H1 (cell line): ENCODE measurements at regions of chr12 and their contacts with region 1.

Region 1: DNA sequence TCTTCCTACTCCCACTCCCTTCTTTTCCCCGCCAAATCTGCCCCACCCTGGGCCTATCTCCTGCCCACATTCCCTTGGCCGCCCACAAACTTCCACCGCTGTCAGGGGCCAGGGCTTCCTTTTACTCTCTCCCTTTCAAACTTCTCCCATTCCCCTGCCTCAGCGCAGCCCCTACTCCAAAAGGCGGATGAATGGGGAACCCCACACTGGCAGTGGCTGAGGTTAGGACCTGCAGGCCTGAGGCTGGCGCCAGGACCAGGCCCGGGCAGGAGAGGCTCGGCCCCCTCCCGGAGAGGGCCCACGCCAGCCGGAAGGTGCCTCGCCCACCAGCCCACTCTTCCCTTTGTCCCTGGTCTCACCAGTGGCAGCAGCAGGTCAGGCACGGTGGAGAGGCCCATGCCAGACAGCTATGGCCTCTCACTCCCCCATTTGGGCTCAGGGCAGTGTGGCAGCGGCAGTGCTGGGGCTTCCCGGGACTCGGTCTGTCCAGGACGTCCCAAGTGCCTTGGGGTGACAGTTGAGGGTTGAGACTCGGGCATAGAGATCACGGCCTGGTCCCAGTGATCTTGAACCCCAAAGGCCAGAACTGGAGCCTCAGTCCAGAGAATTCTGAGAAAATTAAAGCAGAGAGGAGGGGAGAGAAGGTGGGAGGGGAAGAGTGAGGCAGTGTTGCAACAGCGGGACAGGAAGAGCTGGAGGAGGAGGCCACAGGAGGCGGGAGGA is at the start of gene TNFRSF1A:
- DNase-seq: no peak
- H3K4me3 ChIP-seq: peak within 1 kb of the TSS; percentile 54 to 89 (median 82)
- H3K27ac ChIP-seq: peak within 1 kb of the TSS; percentile 44; the same call in 1 of the 2 replicates
- H3K4me1 ChIP-seq: peaks cover 22 to 50% (median 30%) of the 10 kb centered on the region in 4 experiments
- H3K27me3 ChIP-seq: no peaks in the 10 kb centered on the region
- CTCF ChIP-seq: no peak
- EP300 ChIP-seq: no peak
- POLR2A ChIP-seq: no peak
- RAD21 ChIP-seq: no peak
- total RNA-seq, gene TNFRSF1A: 42.1 and 45.8 TPM in 2 replicates

Region 2: GRCh38 chr12:6171409-6172015 is 170.1 kb before region 1 on chr12:
- CTCF ChIA-PET with region 1: no interaction called
- POLR2A ChIA-PET with region 1: no interaction called
- DNase-seq: no peak
- H3K4me3 ChIP-seq: no peak overlapping the region
- H3K27ac ChIP-seq: no peak overlapping the region
- H3K4me1 ChIP-seq: no peaks in the 10 kb centered on the region
- H3K27me3 ChIP-seq: no peaks in the 10 kb centered on the region
- CTCF ChIP-seq: no peak
- EP300 ChIP-seq: no peak
- POLR2A ChIP-seq: no peak
- RAD21 ChIP-seq: no peak

Region 3: DNA sequence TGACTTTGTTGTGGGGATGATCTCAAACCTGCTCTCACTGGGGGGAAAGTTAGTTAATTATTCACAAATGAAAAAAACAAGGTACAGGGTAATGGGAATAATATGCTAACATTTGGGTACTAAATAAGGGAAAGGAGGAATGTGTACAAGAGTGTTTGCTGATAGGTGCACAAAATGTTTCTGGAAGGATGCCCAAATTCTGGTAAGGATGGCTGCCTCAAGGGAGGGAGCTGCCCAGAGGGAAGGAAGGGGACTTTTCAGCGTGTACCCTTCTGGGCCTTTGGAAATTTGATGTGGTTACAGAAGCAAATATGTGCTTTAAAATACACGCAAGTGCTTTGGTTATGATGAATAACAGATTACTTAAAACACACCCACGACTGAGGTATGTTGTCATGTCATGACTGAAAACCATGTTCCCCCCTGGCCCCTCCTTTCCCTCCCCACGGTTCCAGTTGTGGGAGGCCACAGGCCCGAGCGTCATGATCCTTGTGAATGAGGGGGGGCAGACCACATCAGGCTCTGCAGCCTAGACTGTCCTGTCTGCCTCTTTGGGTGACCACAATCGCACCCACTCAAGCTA is 74.3 kb before region 1 on chr12:
- CTCF ChIA-PET with region 1: no interaction called
- POLR2A ChIA-PET with region 1: no interaction called
- DNase-seq: no peak
- H3K4me3 ChIP-seq: no peak overlapping the region
- H3K27ac ChIP-seq: no peak overlapping the region
- H3K4me1 ChIP-seq: peaks cover 9 to 17% (median 13%) of the 10 kb centered on the region in 4 experiments
- H3K27me3 ChIP-seq: no peaks in the 10 kb centered on the region
- CTCF ChIP-seq: no peak
- EP300 ChIP-seq: no peak
- POLR2A ChIP-seq: no peak
- RAD21 ChIP-seq: no peak

Region 4: DNA sequence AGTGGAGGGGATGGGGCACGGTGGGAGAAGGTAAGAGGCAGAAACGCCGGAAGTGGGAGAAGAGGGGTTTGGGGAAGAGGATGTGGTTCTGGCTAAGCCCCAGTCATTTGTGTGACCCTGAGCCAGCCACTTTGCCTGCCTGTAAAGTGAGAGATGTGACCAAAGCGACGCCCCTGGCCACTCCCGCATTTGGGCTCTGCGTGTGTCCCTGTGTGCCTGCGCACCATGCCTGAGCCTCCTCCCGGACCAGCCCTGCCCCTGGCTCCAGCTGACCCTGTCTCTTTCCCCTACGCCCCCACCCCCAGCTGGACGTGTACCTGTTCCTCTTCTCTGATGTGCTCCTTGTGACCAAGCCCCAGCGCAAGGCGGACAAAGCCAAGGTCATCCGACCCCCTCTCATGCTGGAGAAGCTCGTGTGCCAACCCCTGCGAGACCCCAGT is 23.1 kb before region 1 on chr12:
- CTCF ChIA-PET with region 1: interaction called, 6 read pairs
- POLR2A ChIA-PET with region 1: interaction called, 31 read pairs
- DNase-seq: no peak
- H3K4me3 ChIP-seq: no peak overlapping the region
- H3K27ac ChIP-seq: no peak overlapping the region
- H3K4me1 ChIP-seq: peaks cover 4 to 18% (median 9%) of the 10 kb centered on the region in 4 experiments
- H3K27me3 ChIP-seq: no peaks in the 10 kb centered on the region
- CTCF ChIP-seq: no peak
- EP300 ChIP-seq: no peak
- POLR2A ChIP-seq: no peak; a peak in 1 of 3 replicates
- RAD21 ChIP-seq: no peak

Region 5: GRCh38 chr12:6361834-6362782 is 20.5 kb after region 1 on chr12:
- CTCF ChIA-PET with region 1: interaction called, 74 read pairs
- POLR2A ChIA-PET with region 1: interaction called, 259 read pairs
- DNase-seq: no peak
- H3K4me3 ChIP-seq: no peak overlapping the region
- H3K27ac ChIP-seq: no peak overlapping the region
- H3K4me1 ChIP-seq: peaks cover 0 to 3% (median 1%) of the 10 kb centered on the region in 4 experiments; a peak in 3 of 7 replicates
- H3K27me3 ChIP-seq: no peaks in the 10 kb centered on the region
- CTCF ChIP-seq: no peak
- EP300 ChIP-seq: no peak
- POLR2A ChIP-seq: no peak
- RAD21 ChIP-seq: no peak

Region 6: DNA sequence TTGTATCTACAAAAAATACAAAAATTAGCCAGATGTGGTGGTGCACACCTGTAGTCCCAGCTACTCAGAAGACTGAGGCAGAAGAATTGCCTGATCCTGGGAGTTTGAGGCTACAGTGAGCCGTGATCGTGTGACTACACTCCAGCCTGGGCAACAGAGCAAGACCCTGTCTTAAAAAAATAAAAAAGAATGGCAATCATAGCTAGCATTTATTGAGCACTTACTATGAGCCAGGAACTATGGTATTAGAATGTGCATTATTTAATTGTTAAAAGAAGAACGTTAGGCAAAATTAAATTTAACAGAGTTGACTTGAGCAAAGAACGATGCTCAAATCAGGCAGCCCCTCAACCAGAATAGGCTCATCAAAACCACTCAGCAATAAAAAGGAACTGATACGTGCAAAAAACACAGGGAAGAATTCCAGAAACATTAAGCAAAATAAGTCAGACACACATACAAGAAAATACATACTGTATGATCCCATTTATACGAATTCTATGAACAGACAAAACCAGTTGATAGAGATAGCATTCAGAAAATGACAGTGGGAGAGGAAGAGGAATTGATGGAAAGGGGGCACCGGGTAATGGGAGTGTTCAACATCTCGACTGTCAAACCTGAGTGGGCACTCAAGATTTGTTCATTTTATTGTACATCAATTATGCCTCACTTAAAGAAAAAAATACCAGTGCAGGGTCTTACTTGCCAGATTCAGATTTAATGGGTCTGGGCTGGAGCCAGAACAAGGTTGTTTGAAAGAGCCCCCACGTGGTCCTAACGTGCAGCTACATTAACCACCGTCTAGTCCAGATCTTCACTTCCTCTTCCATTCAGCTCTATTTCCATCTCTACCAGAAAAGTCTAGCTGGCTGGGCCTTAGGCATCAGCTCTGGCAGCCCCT is 25.7 kb after region 1 on chr12:
- CTCF ChIA-PET with region 1: interaction called, 14 read pairs
- POLR2A ChIA-PET with region 1: interaction called, 259 read pairs
- DNase-seq: no peak
- H3K4me3 ChIP-seq: no peak overlapping the region
- H3K27ac ChIP-seq: no peak overlapping the region
- H3K4me1 ChIP-seq: peaks cover 10 to 23% (median 14%) of the 10 kb centered on the region in 4 experiments
- H3K27me3 ChIP-seq: no peaks in the 10 kb centered on the region
- CTCF ChIP-seq: 0 out of 4 replicates have a peak, but pooled peaks of 1 of the 3 experiments have one; percentile 3
- EP300 ChIP-seq: no peak
- POLR2A ChIP-seq: no peak
- RAD21 ChIP-seq: peak in 1 of 2 experiments; percentile 9; a peak in 1 of 4 replicates